Left ventricle myocardium inferior (tissue), 1 donor: ENCODE measurements at regions of chr7 and their contacts with region 1.

Region 1: GRCh38 chr7:131507592-131508331 is 48.7 kb downstream of the PODXL start:
- DNase-seq: peak; percentile 87
- H3K4me3 ChIP-seq: peak overlapping the region; percentile 33
- H3K27ac ChIP-seq: peak overlapping the region; percentile 57
- H3K4me1 ChIP-seq: peaks cover 74% of the 10 kb centered on the region
- H3K27me3 ChIP-seq: no peaks in the 10 kb centered on the region
- CTCF ChIP-seq: peak; percentile 96

Region 2: GRCh38 chr7:131654668-131655326 is 147.0 kb after region 1 on chr7:
- intact Hi-C with region 1: loop called (anchors 5 kb)
- DNase-seq: peak; percentile 87
- H3K4me3 ChIP-seq: no peak overlapping the region
- H3K27ac ChIP-seq: no peak overlapping the region
- H3K4me1 ChIP-seq: peaks cover 38% of the 10 kb centered on the region
- H3K27me3 ChIP-seq: no peaks in the 10 kb centered on the region
- CTCF ChIP-seq: peak; percentile 88

Region 3: DNA sequence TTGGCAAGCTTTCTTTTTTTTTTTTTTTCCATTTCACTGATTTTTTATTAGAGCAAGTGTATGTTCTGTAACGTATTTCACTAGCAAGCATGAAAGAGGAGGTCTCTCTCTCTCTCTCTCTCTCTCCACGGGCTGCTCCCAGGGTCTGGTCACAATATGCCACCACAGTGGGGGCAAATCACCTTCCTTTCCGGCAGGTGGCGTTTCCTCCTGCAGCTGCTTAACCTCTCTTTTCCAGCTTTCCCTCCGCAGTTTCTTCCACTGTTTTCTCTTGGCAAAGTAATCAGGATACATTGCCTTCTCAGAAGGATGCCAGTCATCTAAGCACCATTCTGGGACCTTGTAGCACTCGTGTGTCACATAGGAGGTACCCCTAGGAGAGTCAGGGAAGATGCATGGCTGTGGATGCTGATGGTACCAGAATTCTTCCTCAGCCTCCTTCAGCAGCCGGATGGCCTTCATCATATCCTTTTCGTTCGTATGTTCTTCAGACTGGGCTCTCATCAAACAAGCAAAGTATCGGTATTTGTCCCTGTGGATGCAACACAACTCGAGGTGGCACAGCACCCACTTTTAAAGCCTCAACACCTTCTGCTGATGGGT is 246.0 kb after region 1 on chr7:
- intact Hi-C with region 1: no loop called
- DNase-seq: no peak
- H3K4me3 ChIP-seq: no peak overlapping the region
- H3K27ac ChIP-seq: no peak overlapping the region
- H3K4me1 ChIP-seq: no peaks in the 10 kb centered on the region
- H3K27me3 ChIP-seq: peaks cover 49% of the 10 kb centered on the region
- CTCF ChIP-seq: peak; percentile 31